Activated CD4-positive, alpha-beta T cell treated with anti-CD3 and anti-CD28 coated beads for 36 hours (primary cell): ENCODE measurements at regions of chr19 and their contacts with region 1.

Region 1: DNA sequence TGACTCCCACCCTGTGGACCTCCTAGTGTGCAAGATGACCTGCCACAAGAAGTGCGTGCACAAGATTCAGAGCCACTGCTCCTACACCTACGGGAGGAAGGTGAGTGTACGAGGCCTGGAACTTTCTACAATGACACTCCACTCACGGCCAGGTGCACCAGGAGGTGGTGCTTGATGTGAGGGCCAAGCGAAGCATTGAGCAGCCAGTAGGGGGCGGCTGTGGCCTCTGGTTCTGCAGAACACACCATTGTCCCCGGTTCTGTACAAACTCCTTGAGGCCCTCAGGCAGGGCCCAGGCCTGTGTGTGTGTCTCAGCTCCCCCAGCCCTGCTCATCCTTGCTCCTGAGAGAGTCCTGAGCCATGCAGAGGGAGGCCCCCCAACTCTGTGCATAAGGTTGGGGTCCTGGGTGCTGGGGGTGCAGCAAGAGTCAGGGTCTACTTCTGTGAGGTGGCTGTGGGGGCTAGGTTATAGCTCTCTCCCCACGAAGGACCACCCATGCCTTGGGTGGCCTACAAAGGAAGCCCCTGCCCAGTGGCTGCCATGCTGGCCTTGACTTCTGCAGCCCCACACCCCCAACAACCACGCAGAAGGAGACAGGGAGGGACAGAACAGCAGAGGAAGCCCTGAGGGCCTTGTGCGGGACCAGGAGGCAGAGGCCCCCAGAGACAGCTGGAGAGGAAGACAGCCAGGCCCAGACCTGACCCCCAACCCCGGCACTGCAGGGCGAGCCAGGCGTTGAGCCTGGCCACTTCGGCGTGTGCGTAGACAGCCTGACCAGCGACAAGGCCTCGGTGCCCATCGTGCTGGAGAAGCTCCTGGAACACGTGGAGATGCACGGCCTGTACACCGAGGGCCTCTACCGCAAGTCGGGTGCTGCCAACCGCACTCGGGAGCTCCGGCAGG is 9.7 kb upstream of the USE1 start:
- DNase-seq: peak; percentile 79
- ATAC-seq: peak; percentile 66
- H3K4me3 Mint-ChIP-seq: no peak overlapping the region
- H3K27ac Mint-ChIP-seq: no peak overlapping the region
- H3K4me1 Mint-ChIP-seq: peaks cover 9% of the 10 kb centered on the region
- H3K27me3 Mint-ChIP-seq: no peaks in the 10 kb centered on the region

Region 2: GRCh38 chr19:17235618-17236377 is 30.3 kb after region 1 on chr19:
- CTCF ChIA-PET with region 1: interaction called, 6 read pairs
- POLR2A ChIA-PET with region 1: interaction called, 3 read pairs
- intact Hi-C with region 1: loop called in 1 of 2 experiments (anchors 1 kb)
- DNase-seq: peak; percentile 87
- ATAC-seq: peak; percentile 85
- H3K4me3 Mint-ChIP-seq: peak overlapping the region; percentile 79
- H3K27ac Mint-ChIP-seq: peak overlapping the region; percentile 65
- H3K4me1 Mint-ChIP-seq: peaks cover 9% of the 10 kb centered on the region
- H3K27me3 Mint-ChIP-seq: no peaks in the 10 kb centered on the region